Ovary (tissue), 10 donors: ENCODE measurements at regions of chr9 and their contacts with region 1.

Region 1: DNA sequence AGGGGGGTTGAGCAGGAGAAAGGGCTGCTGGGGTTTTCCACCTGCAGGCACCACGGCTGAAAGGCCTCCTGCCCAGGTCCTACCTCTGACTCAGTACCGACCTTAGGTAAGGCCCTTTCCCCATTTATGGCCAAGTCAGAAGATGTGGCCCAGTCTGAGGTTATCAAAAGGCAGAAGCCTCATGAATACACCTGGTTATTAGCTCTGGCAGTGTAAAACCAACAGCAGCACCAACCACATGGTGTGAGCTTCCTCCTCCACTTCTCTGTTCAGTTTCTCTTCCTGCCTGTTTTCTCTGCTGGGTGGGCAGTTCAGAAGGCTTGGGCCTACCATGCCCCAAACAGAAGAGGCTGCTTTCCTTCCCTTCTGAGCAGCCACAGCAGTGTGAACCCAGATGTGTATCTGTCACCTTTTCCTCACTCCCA is 86.9 kb downstream of the UGCG start:
- DNase-seq: no peak
- H3K4me3 ChIP-seq: no peak overlapping the region
- H3K27ac ChIP-seq: no peak overlapping the region
- H3K4me1 ChIP-seq: no peaks in the 10 kb centered on the region
- H3K27me3 ChIP-seq: no peaks in the 10 kb centered on the region
- CTCF ChIP-seq: no peak
- EP300 ChIP-seq: no peak
- POLR2A ChIP-seq: no peak

Region 2: GRCh38 chr9:111961575-111961974 is 21.9 kb before region 1 on chr9:
- intact Hi-C with region 1: loop called in 1 of 4 experiments (anchors 1 kb)
- DNase-seq: no peak
- H3K4me3 ChIP-seq: no peak overlapping the region
- H3K27ac ChIP-seq: no peak overlapping the region
- H3K4me1 ChIP-seq: peaks cover 2% of the 10 kb centered on the region
- H3K27me3 ChIP-seq: no peaks in the 10 kb centered on the region
- CTCF ChIP-seq: no peak
- EP300 ChIP-seq: no peak
- POLR2A ChIP-seq: no peak